A673 (cell line): ENCODE measurements at regions of chr7 and their contacts with region 1.

Region 1: DNA sequence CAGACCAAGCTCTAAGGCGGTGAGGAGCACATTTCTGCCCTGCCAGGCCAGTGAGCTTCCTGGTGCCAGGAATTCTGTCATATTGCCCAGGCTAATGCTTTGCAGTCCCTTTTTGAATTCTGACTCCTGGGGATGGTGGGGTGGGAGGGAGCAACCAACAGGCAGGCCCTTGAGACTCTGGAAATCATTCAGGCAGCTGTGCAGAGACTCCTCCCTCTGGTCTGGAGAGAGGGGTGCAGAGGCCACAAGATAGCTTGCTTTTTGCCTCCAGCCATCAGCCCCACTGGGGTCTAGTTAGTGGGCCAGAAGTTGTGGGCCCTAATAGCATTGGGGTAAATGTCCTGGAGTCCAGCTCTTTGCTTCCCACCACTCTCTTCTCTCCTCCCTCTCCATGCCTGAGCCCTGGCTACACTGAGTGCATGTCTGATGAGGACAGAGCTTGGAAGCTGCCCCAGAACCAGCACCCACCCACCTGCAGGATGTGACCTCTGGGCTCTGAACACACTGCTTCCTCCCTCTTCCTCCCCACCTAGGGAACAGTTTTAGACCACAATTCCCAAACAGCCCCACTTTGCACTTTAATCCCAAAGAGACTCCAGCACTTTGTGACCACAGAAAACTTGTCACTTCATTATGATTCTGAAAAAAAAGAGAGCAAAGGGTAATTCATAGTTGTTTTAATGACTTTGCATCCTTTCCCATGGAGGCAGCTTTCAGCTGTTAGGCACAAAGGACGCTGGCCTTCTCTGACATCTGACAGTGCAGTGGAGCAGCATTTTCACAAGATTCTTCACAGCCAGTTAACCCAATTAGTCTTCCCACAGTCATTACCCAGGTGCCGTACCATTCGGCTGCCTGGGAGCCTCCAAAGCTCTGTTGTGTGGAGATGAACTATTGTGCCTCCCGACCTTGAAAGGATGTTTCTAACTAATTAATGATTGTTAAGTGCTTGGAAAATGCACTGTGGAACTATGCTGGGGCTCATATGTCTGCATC is 262.5 kb downstream of the TRIL start:
- DNase-seq: no peak
- H3K4me3 ChIP-seq: no peak overlapping the region
- H3K27ac ChIP-seq: no peak overlapping the region
- H3K4me1 ChIP-seq: peaks cover 26% of the 10 kb centered on the region
- H3K27me3 ChIP-seq: no peaks in the 10 kb centered on the region
- CTCF ChIP-seq: no peak

Region 2: GRCh38 chr7:28774261-28774988 is 78.8 kb after region 1 on chr7:
- CTCF ChIA-PET with region 1: no interaction called
- POLR2A ChIA-PET with region 1: no interaction called
- intact Hi-C with region 1: no loop called
- DNase-seq: no peak
- H3K4me3 ChIP-seq: no peak overlapping the region
- H3K27ac ChIP-seq: no peak overlapping the region
- H3K4me1 ChIP-seq: no peaks in the 10 kb centered on the region
- H3K27me3 ChIP-seq: no peaks in the 10 kb centered on the region
- CTCF ChIP-seq: no peak

Region 3: DNA sequence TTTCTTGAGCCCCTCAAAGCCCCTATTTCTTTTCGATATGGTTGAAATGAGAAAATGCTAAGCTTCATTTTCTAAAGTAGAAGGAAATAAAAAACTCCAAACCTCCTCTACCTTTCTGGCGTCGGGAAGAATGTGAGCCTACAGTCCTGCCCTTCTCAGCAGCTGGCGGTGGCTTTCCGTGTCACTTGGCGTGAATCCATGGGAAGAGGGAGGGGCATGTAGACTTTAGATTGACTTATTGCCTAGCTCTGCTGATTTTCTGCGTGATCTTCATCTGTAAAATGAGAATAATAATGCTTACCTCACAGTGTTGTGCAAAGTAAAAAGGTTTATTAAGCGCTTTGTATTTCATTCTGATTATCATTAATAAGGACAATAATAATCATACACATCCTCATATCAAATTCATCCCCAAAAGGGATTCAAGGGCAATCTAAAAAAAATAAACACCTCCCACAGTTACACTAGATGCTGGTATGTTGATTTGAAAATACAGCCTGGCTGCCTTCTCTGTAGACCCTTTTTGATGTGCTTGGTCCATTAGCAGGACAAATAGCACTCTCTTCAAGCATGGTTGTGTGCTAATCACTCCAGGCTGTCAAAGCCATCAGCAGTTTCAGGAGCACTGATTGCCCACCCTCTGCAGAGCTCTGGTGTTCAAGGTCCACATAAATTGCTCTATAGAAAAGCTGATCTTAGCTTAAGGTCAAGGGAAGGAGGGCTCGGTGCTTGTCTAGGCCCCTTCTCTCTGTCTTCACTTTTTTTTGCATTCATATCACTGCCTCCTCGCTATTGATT is 903.2 kb after region 1 on chr7:
- CTCF ChIA-PET with region 1: no interaction called
- POLR2A ChIA-PET with region 1: no interaction called
- intact Hi-C with region 1: loop called (anchors 5 kb)
- DNase-seq: peak; percentile 18
- H3K4me3 ChIP-seq: no peak overlapping the region
- H3K27ac ChIP-seq: no peak overlapping the region
- H3K4me1 ChIP-seq: no peaks in the 10 kb centered on the region
- H3K27me3 ChIP-seq: no peaks in the 10 kb centered on the region
- CTCF ChIP-seq: no peak

Region 4: DNA sequence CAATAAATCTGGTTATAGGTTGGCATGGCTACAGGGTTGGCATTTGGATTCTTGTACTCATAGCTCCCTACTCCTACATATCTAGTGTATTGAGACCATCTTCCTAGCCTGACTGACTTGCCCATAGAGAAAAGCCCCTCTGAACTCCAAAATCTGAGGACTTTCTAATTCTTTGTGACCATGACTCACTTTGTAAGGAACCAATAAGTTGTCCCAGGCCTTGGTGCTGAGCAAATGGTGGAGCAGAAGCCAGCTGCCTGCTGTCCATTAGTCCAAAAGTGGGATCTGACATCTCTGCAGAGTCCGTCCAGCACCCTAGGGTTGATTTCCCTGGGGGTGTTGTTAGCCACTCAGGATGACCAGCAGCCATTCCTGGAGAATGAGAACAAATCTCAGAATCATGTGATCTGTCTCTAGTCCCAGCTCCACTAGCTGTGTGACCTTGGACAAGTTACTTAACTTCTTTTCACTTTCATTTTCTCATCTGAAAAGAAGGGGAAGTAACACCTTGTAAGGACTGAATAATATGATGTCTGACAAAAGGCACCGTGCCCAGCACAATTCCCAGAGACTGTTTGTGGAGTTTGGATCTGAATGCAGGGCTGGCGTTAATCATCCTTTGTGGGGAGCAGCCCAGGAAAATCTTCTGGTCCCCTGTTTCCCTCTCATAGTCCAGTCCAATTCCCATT is 1483.3 kb after region 1 on chr7:
- CTCF ChIA-PET with region 1: no interaction called
- POLR2A ChIA-PET with region 1: no interaction called
- intact Hi-C with region 1: no loop called
- DNase-seq: no peak
- H3K4me3 ChIP-seq: no peak overlapping the region
- H3K27ac ChIP-seq: no peak overlapping the region
- H3K4me1 ChIP-seq: no peaks in the 10 kb centered on the region
- H3K27me3 ChIP-seq: no peaks in the 10 kb centered on the region
- CTCF ChIP-seq: no peak